ENCODE measurements at regions of chr10 and their contacts with region 1.

Region 1: DNA sequence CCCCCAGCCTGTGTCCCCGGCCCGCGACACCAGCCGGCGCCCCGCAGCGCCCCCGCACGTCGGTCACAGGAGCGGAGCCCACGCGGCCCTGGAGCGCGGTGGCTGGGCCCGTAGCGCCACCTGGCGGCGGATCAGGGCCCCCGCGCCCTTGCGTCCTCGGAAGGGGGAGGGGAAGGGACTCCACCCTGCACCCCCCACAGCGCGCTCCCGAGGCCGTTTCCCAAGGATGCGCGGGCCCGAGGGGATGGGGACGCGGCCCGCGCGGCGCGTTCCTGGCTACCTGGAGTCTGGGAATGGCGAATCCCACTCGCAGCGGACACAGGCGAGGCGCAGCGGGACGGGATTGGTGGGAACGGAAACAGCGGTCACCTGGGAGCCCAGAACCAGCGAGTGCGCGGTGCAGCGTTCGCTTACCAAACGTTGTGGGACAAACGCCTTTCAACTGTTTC is 23.8 kb upstream of the MKI67 start:
- DNase-seq: peak; percentile 61
- H3K4me3 ChIP-seq: peak overlapping the region in 2 of 3 experiments; percentile 47 to 60
- H3K27ac ChIP-seq: no peak overlapping the region
- H3K4me1 ChIP-seq: no peaks in the 10 kb centered on the region
- H3K27me3 ChIP-seq: peaks cover 6 to 15% of the 10 kb centered on the region in 2 experiments
- CTCF ChIP-seq: peak; percentile 93 to 97
- POLR2A ChIP-seq: no peak

Region 2: DNA sequence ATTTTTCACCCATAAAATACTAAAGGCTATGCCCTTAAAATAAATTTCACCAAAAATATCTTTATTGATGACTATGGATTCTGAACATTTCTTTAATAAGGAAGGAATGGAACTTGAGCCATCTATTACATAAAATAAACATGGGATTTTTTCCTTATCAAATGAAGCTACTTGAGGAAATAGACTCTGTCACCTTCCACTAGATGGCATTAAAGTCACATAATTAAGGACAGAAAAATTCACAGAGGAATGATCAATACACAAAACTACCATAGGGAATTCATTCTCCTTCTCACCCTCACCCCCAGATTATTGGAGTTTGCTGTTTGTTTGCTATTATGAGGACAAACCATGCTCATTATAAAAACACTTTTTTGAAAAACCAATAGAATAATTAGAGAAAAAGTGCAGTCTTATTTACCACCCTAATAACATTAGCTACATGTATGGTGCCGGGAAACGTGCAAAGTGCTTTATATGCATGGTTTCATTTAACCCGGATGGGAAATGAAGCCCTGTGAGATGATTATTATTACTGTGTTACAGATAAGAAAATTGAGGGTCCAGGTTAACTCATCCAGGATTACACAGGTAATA is 434.2 kb before region 1 on chr10:
- CTCF ChIA-PET with region 1: interaction called, 10 read pairs
- POLR2A ChIA-PET with region 1: no interaction called
- dilution Hi-C with region 1: no loop called
- intact Hi-C with region 1: loop called (anchors 1 kb)
- DNase-seq: peak; percentile 25
- H3K4me3 ChIP-seq: no peak overlapping the region
- H3K27ac ChIP-seq: no peak overlapping the region
- H3K4me1 ChIP-seq: no peaks in the 10 kb centered on the region
- H3K27me3 ChIP-seq: no peaks in the 10 kb centered on the region
- CTCF ChIP-seq: peak in 1 of 2 donors; percentile 7
- POLR2A ChIP-seq: no peak

Region 3: GRCh38 chr10:127872871-127873600 is 277.0 kb before region 1 on chr10:
- CTCF ChIA-PET with region 1: interaction called, 4 read pairs
- POLR2A ChIA-PET with region 1: no interaction called
- dilution Hi-C with region 1: no loop called
- intact Hi-C with region 1: loop called (anchors 2 kb)
- DNase-seq: peak; percentile 25
- H3K4me3 ChIP-seq: no peak overlapping the region
- H3K27ac ChIP-seq: no peak overlapping the region
- H3K4me1 ChIP-seq: peaks cover 5% of the 10 kb centered on the region
- H3K27me3 ChIP-seq: peaks cover 4 to 19% of the 10 kb centered on the region in 2 experiments
- CTCF ChIP-seq: peak; percentile 20 to 34
- POLR2A ChIP-seq: no peak

Region 4: DNA sequence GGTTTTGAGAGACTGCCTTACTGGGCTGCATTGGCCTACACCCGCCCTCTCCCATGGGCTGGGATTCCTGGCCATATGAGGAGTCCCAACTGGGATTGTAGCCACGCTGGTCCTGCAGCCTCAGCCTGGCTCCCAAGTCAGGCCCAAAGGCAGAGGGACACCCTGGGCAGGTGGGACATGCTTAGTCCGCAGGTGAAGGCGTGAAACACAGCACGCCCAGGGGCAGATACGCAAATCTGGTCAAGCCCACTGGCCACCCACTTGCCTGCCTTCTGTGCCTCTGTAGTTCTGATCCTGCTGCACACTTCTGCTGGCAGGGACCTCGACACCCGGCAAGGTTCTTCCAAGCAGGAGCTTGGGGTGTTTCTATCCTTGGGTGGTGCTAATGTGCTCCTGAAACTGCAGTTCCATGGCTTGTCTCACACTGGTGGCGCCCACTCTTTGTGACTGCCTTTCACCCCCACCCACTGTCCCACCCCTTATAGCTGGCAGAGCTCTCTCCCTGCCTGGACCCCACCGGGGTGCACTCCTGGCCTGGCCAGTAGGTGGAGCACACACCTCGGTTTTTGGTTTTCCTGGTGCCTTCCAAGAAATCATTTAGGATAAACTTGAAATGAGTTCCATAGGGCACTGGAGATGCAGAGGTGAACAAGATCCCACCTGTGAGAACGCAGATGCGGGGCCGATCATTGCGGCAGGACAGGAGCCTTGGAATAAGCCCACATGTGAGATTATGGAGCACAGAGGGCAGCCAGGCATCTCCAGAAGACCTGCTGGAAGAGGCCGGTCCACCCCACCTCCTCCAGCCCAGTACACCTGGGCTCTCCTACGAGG is 71.7 kb before region 1 on chr10:
- CTCF ChIA-PET with region 1: interaction called, 38 read pairs
- POLR2A ChIA-PET with region 1: interaction called, 3 read pairs
- dilution Hi-C with region 1: no loop called
- intact Hi-C with region 1: loop called (anchors 1 kb)
- DNase-seq: peak; percentile 39
- H3K4me3 ChIP-seq: no peak overlapping the region
- H3K27ac ChIP-seq: no peak overlapping the region
- H3K4me1 ChIP-seq: peaks cover 1% of the 10 kb centered on the region
- H3K27me3 ChIP-seq: no peaks in the 10 kb centered on the region
- CTCF ChIP-seq: peak; percentile 51 to 75
- POLR2A ChIP-seq: no peak

Region 5: DNA sequence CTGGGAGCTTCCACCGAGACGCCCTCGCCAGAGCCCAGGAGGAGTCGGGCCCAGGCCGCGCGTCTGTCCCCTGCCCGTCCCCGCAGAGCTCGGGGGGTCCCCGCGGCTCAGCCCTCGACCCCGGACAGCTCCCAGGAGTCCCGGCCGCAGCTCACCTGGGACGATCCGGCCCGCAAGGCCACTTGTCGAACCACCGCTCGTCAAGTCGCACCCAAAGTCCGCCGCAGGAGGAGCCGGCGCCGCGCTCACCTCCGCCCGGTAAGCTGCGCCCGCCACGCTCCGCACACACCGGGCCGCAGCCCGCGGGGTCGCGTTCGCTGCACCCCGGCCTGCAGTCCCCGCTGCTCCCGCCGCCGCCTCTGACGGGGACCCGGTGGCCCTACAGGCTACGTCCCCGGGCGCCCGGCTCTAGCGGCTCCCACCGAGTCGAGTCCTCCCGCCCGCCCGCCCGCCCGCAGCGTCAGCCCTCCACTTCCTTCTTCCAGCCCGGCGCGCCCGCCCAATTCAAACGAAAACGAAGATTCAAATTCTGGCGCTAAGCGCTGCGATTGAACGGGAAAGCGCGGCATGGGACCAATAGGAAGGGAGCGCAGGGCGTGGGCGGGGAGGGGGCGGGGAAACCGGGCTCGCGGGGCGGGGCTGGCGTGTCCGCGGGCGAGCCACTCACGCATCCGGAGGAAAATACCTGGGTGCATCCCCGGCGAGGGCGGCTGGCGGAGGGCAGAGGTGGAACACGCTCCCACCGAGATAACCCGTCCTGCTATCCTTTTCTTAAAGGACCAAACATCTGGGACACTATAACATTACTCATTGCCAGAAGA is 23.9 kb before region 1 on chr10 and contains the start of gene MKI67:
- CTCF ChIA-PET with region 1: interaction called, 6 read pairs
- POLR2A ChIA-PET with region 1: no interaction called
- dilution Hi-C with region 1: no loop called
- intact Hi-C with region 1: loop called (anchors 1 kb)
- DNase-seq: peak; percentile 90
- H3K4me3 ChIP-seq: peak within 1 kb of the TSS; percentile 84 to 96 (median 89)
- H3K27ac ChIP-seq: peak within 1 kb of the TSS; percentile 57
- H3K4me1 ChIP-seq: peaks cover 34% of the 10 kb centered on the region
- H3K27me3 ChIP-seq: no peaks in the 10 kb centered on the region
- CTCF ChIP-seq: no peak
- POLR2A ChIP-seq: no peak
- total RNA-seq, gene MKI67: 101 and 125 TPM in 2 replicates

Region 6: DNA sequence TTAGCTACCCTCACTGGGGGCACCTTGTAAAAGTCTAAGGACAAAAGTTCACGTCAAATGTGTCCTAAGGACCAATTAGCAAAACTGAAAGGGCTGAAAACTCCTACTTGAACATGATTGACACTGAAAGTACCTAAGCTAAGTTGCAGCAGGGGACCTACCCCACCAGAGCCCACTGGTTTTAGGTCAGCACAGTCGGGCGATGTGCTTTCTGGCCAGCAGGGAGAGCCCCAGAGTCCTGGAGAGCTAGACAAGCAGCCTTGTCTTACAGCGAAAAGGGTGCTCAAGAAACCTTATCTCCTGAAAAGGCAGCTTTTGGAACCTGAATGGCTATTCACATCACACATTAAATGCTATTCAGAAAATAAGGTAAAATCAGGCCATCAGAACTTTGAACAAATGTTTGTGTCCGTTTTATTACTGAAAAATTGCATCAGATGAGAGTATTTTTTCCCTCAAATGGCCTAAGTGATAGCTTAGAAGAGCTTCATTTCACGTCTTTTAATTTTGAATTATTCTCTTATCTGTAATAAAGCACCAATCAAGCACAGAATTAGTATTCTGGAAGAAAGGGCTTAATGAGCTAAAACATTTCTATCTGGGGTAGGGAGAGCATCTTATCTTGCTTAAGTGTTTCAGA is 28.4 kb after region 1 on chr10:
- CTCF ChIA-PET with region 1: interaction called, 10 read pairs
- POLR2A ChIA-PET with region 1: no interaction called
- dilution Hi-C with region 1: no loop called
- intact Hi-C with region 1: no loop called
- DNase-seq: peak; percentile 35
- H3K4me3 ChIP-seq: no peak overlapping the region
- H3K27ac ChIP-seq: no peak overlapping the region
- H3K4me1 ChIP-seq: no peaks in the 10 kb centered on the region
- H3K27me3 ChIP-seq: peaks cover 0 to 3% of the 10 kb centered on the region in 2 experiments
- CTCF ChIP-seq: peak; percentile 60 to 73
- POLR2A ChIP-seq: no peak

Region 7: DNA sequence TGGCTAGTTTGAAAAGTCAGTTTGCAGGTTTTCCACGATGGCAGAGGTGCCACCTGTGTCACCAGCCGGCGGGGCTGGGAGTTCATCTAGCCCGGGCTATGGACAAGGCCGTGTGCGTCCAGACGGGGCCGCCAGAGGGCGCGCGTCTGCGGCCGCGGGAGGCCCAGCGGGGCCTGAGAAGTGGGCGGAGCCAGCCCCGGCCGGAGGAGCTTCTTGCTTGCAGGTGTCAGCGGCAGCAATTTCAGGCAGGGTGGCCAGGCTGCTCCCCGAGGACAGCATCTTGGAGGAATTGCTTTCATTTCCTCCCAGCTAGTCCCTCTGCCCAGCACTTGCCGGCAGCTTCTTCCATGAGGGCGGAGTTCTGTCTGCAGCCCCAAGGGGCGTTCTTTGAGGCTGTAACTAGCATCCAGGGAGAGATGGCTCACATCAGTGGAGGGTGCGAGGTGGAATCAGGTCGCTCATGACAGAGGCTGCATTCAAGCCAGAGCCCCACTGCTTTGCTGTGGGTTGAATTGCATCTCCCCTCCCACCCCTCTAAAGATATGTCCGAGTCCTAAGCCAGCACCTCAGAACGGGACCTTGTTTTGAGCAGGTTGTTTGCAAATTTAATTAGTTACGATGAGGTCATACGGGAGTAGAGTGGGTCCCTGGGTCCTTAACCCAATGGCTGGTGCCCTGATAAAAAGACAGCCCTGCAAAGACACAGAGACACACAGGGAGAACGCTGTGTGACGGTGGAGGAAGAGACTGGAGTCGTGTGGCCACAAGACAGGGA is 62.1 kb after region 1 on chr10:
- CTCF ChIA-PET with region 1: interaction called, 7 read pairs
- POLR2A ChIA-PET with region 1: no interaction called
- dilution Hi-C with region 1: no loop called
- intact Hi-C with region 1: loop called (anchors 2 kb)
- DNase-seq: peak; percentile 72
- H3K4me3 ChIP-seq: no peak overlapping the region
- H3K27ac ChIP-seq: no peak overlapping the region
- H3K4me1 ChIP-seq: peaks cover 9% of the 10 kb centered on the region
- H3K27me3 ChIP-seq: no peaks in the 10 kb centered on the region
- CTCF ChIP-seq: peak; percentile 99 to 100
- POLR2A ChIP-seq: no peak

Region 8: GRCh38 chr10:128337860-128338378 is 187.8 kb after region 1 on chr10:
- CTCF ChIA-PET with region 1: no interaction called
- POLR2A ChIA-PET with region 1: no interaction called
- dilution Hi-C with region 1: no loop called
- intact Hi-C with region 1: no loop called
- DNase-seq: no peak
- H3K4me3 ChIP-seq: no peak overlapping the region
- H3K27ac ChIP-seq: no peak overlapping the region
- H3K4me1 ChIP-seq: no peaks in the 10 kb centered on the region
- H3K27me3 ChIP-seq: no peaks in the 10 kb centered on the region
- CTCF ChIP-seq: no peak
- POLR2A ChIP-seq: no peak

Measured in endothelial cell of umbilical vein (primary cell).